Heart left ventricle (tissue), 16 donors: ENCODE measurements at regions of chr17 and their contacts with region 1.

Region 1: GRCh38 chr17:49315551-49316257 is 46.3 kb downstream of the ZNF652 start:
- DNase-seq: peak in 4 of 5 donors; percentile 68 to 71 (median 69)
- ATAC-seq: peak; percentile 92 to 99 (median 98)
- H3K4me3 ChIP-seq: peak overlapping the region in 3 of 12 donors; percentile 6 to 20 (median 7)
- H3K27ac ChIP-seq: peak overlapping the region in 1 of 12 donors; percentile 35
- H3K4me1 ChIP-seq: peaks cover 0 to 23% (median 0%) of the 10 kb centered on the region in 12 donors
- H3K27me3 ChIP-seq: no peaks in the 10 kb centered on the region
- CTCF ChIP-seq: peak; percentile 61 to 92 (median 82)
- POLR2A ChIP-seq: no peak

Region 2: DNA sequence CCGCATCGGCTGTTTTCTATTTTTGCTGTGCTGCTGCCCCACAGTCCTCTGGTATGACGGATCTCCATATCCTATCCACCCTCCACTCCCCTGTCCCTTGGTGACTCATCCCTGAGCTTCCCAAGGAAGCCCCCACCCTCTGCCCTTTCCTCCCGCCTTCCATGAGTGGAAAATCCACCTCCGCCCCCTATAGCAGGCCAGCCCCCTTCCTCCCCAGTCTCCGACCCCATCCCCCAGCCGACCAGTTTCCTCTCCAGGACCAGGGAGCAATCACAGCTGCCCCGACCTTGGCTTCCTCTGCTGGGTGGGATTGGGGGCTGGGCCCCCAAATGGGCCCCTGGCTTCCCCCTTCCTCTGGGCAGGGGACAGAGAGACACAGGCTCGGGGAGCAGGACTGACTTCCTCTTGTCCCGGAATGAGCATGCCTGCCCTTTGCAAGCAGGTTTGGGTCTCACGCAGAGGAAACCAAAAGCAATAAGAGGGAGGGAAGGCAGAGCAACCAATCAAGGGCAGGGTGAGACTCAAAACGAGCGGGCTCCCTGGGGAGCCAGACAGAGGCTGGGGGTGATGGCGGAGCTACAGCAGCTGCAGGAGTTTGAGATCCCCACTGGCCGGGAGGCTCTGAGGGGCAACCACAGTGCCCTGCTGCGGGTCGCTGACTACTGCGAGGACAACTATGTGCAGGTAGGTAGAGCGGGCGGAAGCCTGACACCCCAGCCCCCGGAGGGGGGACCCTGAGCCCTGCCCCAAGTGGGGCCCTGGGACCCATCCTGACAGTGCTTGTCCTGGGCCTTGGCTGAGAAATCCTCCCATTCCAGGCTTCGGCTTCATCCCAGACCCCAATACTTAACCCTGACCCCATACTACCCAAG is 105.3 kb before region 1 on chr17 and contains the starts of genes ABI3 and GNGT2:
- intact Hi-C with region 1: no loop called
- DNase-seq: peak; percentile 46 to 75 (median 64)
- ATAC-seq: peak; percentile 83 to 93 (median 88)
- H3K4me3 ChIP-seq: peak within 1 kb of the TSS; percentile 32 to 70 (median 60)
- H3K27ac ChIP-seq: peak within 1 kb of the TSS; percentile 65 to 91 (median 84)
- H3K4me1 ChIP-seq: peaks cover 0 to 69% (median 24%) of the 10 kb centered on the region in 12 donors
- H3K27me3 ChIP-seq: peaks cover 0 to 7% (median 0%) of the 10 kb centered on the region in 9 donors
- CTCF ChIP-seq: no peak
- POLR2A ChIP-seq: peak in 1 of 2 donors; percentile 41
- total RNA-seq, gene ABI3: 3.3 to 16.1 (median 6.4) TPM
- total RNA-seq, gene GNGT2: 0.76 to 4.9 (median 1.2) TPM

Region 3: DNA sequence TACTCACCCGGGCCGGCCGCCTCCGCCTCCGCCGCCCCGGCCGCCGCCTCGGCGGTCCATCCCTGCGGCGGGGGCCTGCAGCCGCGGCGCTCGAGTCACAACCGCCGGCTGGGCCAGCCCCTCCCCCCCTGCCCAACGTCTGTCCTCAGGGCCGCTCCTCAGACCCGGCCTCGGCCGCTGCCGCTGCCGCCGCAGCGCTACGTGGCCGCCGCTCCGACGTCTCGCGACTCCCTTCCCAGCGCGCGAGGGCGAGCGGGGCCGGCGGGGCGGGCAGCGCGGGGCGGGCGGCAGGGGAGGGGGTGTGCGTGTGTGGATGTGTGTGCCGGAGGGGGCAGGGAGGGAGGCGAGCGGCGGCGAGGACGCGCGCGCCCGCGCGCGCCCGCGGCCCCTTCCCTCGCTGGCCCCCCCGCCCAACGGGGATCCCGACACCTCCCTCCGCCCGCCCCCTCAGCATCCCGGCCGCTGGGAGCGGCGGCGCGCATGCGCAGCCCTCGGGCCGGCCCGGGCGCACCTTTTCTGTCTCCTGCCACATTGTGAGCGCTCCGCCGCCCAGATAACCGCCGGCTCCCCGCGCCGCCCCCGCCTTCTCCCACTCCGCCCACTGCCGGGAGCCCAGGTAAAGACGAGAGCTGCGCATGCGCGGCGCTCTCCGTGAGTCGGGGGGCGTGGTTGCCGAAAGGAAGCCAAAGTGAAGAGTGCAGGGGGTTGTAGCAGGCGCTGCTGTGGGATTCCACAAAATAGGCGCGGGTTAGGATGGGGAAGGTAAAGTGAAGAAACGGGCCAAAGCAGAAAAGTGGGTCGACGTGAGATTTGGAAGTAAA is 46.4 kb after region 1 on chr17 and contains the start of gene ZNF652:
- intact Hi-C with region 1: loop called in 2 of 10 experiments (anchors 5 kb)
- DNase-seq: peak; percentile 88 to 93 (median 93)
- ATAC-seq: peak; percentile 82 to 96 (median 89)
- H3K4me3 ChIP-seq: peak within 1 kb of the TSS; percentile 77 to 98 (median 92)
- H3K27ac ChIP-seq: peak within 1 kb of the TSS; percentile 73 to 95 (median 89)
- H3K4me1 ChIP-seq: peaks cover 5 to 53% (median 26%) of the 10 kb centered on the region in 12 donors
- H3K27me3 ChIP-seq: no peaks in the 10 kb centered on the region
- CTCF ChIP-seq: no peak
- POLR2A ChIP-seq: peak in 1 of 2 donors; percentile 8
- total RNA-seq, gene ZNF652: 14.7 to 24.5 (median 23.1) TPM

Region 4: DNA sequence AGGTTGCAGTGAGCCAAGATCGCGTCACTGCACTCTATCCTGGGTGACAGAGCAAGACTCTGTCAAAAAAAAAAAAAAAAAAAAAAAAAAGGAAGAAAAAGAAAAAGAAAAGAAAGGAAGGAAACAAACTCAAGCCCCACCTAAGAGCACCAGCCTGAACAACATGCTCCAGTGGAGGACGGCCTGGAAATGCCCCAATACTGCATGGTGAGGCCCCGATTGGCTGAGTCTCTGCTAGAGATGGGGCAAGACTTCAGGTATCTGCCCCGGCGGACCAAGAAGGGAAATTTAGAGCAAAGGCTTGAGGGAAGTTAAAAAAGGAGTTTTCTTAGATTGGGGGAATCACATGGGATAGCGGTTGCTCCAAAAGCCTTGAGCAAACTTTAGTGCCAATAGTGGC is 56.7 kb after region 1 on chr17:
- intact Hi-C with region 1: no loop called
- DNase-seq: no peak
- ATAC-seq: no peak
- H3K4me3 ChIP-seq: no peak overlapping the region
- H3K27ac ChIP-seq: no peak overlapping the region
- H3K4me1 ChIP-seq: no peaks in the 10 kb centered on the region
- H3K27me3 ChIP-seq: no peaks in the 10 kb centered on the region
- CTCF ChIP-seq: no peak
- POLR2A ChIP-seq: no peak

Region 5: GRCh38 chr17:49390548-49391324 is 75.0 kb after region 1 on chr17:
- intact Hi-C with region 1: loop called (anchors 1 to 2 kb)
- DNase-seq: peak in 4 of 5 donors; percentile 10 to 68 (median 28)
- ATAC-seq: peak in 3 of 4 donors; percentile 47 to 72 (median 70)
- H3K4me3 ChIP-seq: peak overlapping the region in 2 of 12 donors; percentile 26 to 48
- H3K27ac ChIP-seq: peak overlapping the region in 5 of 12 donors; percentile 27 to 92 (median 39)
- H3K4me1 ChIP-seq: peaks cover 0 to 69% (median 4%) of the 10 kb centered on the region in 12 donors
- H3K27me3 ChIP-seq: no peaks in the 10 kb centered on the region
- CTCF ChIP-seq: no peak
- POLR2A ChIP-seq: no peak